A549 (cell line): ENCODE measurements at regions of chr11 and their contacts with region 1.

Region 1: DNA sequence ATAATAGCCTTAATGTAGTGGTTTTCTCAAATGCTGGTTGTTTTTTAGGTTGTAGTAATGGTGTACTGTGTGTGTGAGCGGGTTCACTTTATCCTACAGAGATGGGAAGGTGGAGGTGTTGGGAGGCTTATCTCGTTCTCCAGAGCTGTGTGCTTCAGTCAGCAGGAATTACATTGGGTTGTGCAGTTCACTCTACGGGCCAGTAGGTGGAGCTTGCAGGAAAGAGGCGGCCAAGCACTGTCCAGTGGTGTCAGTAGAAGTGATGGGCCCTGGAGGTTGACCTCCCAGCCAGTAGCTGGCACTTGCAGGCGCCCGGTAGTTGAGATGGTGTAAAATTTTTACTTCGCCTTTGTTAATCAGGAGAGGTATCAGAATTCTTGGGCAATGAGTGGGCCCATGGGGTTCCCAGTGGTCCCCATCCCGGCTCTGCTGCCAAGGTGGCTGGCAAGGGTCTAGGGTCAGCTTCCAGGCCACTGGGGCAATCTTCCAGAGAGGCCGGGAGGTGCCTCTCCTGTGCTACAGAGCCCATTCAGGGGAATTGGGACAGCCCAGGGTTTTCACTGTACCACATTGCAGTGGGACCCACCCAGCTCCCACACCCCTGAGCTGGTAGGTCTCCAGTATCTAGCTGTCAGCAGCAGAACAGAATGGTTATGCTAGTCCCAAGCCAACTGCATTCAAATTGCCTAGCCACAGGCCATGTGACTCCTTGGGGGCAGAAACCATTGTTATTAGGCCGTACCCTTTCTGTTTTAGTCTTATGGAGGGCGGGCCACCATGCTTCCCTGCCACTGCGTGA is 43.9 kb downstream of the BIRC2 start:
- DNase-seq: peak; percentile 24 to 75
- ATAC-seq: peak; percentile 92 to 94
- H3K4me3 ChIP-seq: no peak overlapping the region
- H3K27ac ChIP-seq: peak overlapping the region in 1 of 2 experiments; percentile 54; a peak in 2 of 6 replicates
- H3K4me1 ChIP-seq: 0 out of 3 replicates have a peak, but pooled peaks cover 2% of the 10 kb centered on the region
- CTCF ChIP-seq: peak; percentile 63
- EP300 ChIP-seq: no peak
- POLR2A ChIP-seq: no peak
- RAD21 ChIP-seq: peak; percentile 65 to 78

Region 2: DNA sequence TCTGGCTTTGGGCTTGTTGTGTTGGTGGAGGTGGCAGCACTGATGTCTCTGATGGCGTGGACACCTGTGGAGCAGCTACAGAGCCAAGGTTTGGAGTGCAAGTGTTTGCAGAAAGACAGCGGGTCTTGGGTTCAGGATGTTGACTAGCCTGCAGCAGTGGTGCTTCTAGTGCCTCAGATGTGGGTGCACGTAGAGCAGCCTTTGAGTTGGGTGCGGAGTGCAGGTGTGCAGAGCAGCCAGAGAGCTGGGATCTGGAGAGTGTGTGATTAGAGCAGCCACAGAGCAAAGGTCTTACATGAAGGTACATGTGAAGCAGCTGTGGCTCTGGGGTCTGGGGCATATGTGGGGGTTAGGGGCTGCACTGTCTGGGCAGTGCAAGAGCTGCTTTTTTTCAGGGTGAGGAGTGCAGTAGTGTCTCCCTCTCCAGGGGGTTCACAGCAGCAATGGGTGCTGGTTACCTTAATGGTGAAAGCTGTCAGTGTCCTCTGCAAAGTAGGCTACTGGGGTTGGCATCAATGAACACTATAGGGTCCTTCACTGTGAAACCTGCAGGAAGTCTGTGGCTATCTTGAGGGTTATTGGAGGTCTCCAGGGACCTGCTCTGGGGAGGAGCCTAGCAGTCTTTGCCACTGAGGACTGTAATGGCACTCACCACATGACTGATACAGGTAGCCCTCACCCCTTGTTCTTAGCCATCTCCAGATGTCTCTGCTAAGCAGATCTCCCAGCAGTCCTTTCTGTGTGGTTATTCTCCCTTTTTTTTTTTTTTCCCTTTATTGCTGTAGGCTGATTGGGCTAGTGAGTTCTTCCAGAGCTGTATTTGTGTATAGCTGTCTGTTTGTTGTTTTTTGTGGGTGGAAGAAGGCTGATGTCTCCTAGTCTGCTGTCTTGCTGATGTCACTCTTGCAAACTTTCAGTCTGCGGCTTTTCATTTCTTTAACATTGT is 29.5 kb before region 1 on chr11:
- CTCF ChIA-PET with region 1: interaction called, 13 read pairs
- POLR2A ChIA-PET with region 1: no interaction called
- DNase-seq: no peak
- ATAC-seq: no peak; a peak in 1 of 6 replicates
- H3K4me3 ChIP-seq: no peak overlapping the region
- H3K27ac ChIP-seq: no peak overlapping the region
- H3K4me1 ChIP-seq: no peaks in the 10 kb centered on the region
- CTCF ChIP-seq: no peak
- EP300 ChIP-seq: no peak
- POLR2A ChIP-seq: no peak
- RAD21 ChIP-seq: no peak

Region 3: GRCh38 chr11:102407901-102408300 is 17.0 kb after region 1 on chr11:
- CTCF ChIA-PET with region 1: interaction called, 21 read pairs
- POLR2A ChIA-PET with region 1: no interaction called
- DNase-seq: no peak
- ATAC-seq: no peak
- H3K4me3 ChIP-seq: no peak overlapping the region
- H3K27ac ChIP-seq: no peak overlapping the region
- H3K4me1 ChIP-seq: peaks cover 28% of the 10 kb centered on the region; the same call in 2 of the 3 replicates
- CTCF ChIP-seq: no peak
- EP300 ChIP-seq: no peak
- POLR2A ChIP-seq: no peak
- RAD21 ChIP-seq: no peak

Region 4: GRCh38 chr11:102495161-102496042 is 104.5 kb after region 1 on chr11:
- CTCF ChIA-PET with region 1: interaction called, 14 read pairs
- POLR2A ChIA-PET with region 1: no interaction called
- DNase-seq: peak; percentile 41 to 86
- ATAC-seq: peak; percentile 81 to 85
- H3K4me3 ChIP-seq: no peak overlapping the region
- H3K27ac ChIP-seq: peak overlapping the region; percentile 71 to 80
- H3K4me1 ChIP-seq: peaks cover 36% of the 10 kb centered on the region
- CTCF ChIP-seq: peak; percentile 69
- EP300 ChIP-seq: no peak
- POLR2A ChIP-seq: no peak
- RAD21 ChIP-seq: peak; percentile 83 to 91